Activated CD8-positive, alpha-beta memory T cell treated with anti-CD3 and anti-CD28 coated beads, Interleukin-2, amount 10 ng/mL, durations not matched to agents 7 days and 5 days (primary cell): ENCODE measurements at regions of chr2 and their contacts with region 1.

Region 1: DNA sequence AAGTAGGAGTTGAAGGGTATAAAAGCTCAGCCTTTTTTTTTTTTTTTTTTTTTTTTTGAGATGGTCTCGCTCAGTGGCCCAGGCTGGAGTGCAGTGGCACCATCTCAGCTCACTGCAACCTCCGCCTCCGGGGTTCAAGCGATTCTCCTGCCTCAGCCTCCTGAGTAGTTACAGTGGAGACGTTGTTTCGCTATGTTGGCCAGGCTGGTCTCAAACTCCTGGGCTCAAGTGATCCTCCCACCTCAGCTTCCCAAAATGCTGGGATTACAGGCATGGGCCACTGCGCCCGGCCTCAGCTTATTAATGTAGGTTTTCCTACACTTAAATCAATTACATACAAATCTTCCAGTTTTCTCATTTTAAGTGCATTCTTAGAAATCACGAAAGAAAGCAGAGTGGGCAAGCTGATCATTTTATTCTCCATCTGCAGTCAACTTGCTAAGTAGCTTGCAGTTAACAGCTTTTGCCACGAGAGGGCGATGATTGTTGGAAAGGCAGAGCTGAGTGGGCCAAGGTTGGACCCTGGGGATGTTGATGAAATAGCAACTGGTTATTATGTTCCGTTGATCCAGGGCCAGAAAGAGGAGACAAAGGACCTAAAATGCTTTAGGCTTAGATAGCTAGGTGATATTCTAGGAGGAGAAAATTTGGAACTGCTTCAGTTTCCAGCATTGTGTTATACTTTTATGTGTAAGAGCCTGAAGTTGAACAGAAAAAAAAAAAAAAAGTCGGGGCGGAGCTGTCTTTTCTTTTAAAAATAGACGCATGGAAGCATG is 234.4 kb upstream of the EPAS1 start:
- DNase-seq: peak; percentile 89
- ATAC-seq: peak; percentile 69
- H3K4me3 Mint-ChIP-seq: no peak overlapping the region
- H3K27ac Mint-ChIP-seq: peak overlapping the region; percentile 45
- H3K4me1 Mint-ChIP-seq: peaks cover 43% of the 10 kb centered on the region
- H3K27me3 Mint-ChIP-seq: no peaks in the 10 kb centered on the region

Region 2: GRCh38 chr2:46010925-46011490 is 51.8 kb before region 1 on chr2:
- CTCF ChIA-PET with region 1: interaction called, 16 read pairs
- DNase-seq: peak; percentile 39
- ATAC-seq: peak; percentile 85
- H3K4me3 Mint-ChIP-seq: no peak overlapping the region
- H3K27ac Mint-ChIP-seq: peak overlapping the region; percentile 22
- H3K4me1 Mint-ChIP-seq: peaks cover 51% of the 10 kb centered on the region
- H3K27me3 Mint-ChIP-seq: no peaks in the 10 kb centered on the region

Region 3: GRCh38 chr2:46018773-46019591 is 43.8 kb before region 1 on chr2:
- CTCF ChIA-PET with region 1: interaction called, 11 read pairs
- DNase-seq: no peak
- ATAC-seq: peak; percentile 72
- H3K4me3 Mint-ChIP-seq: peak overlapping the region; percentile 13
- H3K27ac Mint-ChIP-seq: peak overlapping the region; percentile 68
- H3K4me1 Mint-ChIP-seq: peaks cover 77% of the 10 kb centered on the region
- H3K27me3 Mint-ChIP-seq: no peaks in the 10 kb centered on the region

Region 4: GRCh38 chr2:46050489-46050888 is 12.3 kb before region 1 on chr2:
- CTCF ChIA-PET with region 1: interaction called, 38 read pairs
- DNase-seq: no peak
- ATAC-seq: no peak
- H3K4me3 Mint-ChIP-seq: no peak overlapping the region
- H3K27ac Mint-ChIP-seq: peak overlapping the region; percentile 24
- H3K4me1 Mint-ChIP-seq: peaks cover 36% of the 10 kb centered on the region
- H3K27me3 Mint-ChIP-seq: no peaks in the 10 kb centered on the region

Region 5: GRCh38 chr2:46142546-46143428 is 80.0 kb after region 1 on chr2:
- CTCF ChIA-PET with region 1: interaction called, 20 read pairs
- DNase-seq: no peak
- ATAC-seq: no peak
- H3K4me3 Mint-ChIP-seq: no peak overlapping the region
- H3K27ac Mint-ChIP-seq: peak overlapping the region; percentile 58
- H3K4me1 Mint-ChIP-seq: peaks cover 56% of the 10 kb centered on the region
- H3K27me3 Mint-ChIP-seq: no peaks in the 10 kb centered on the region

Region 6: DNA sequence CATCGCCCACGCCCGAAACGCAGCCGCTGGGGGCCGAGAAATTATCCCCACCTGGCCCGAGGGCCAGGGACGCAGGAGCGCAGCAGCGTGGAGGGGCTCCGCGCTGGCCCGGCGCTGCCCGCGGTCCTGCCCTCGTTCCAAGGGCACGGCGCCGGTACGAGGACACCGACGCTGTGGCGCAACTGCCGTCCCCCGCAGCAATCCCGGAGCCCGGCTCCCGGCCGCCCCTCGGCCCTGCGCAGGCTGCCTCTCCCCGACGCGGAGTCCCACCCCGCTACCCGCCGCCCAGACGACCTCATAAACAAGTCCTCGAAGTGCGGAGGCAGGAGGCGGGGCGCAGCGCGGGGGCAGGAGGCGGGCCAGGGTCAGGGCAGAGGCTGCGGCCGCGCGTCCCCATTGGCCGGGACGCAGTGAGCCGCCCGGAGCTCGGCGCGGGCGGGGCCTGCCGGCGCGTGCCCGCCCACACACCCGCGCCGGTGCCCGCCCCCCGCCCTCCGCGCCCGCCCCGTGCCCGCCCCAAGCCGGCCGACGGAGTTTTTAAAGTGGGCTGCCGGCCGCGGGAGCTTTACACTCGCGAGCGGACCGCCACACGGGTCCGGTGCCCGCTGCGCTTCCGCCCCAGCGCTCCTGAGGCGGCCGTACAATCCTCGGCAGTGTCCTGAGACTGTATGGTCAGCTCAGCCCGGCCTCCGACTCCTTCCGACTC is 234.2 kb after region 1 on chr2 and contains the start of gene EPAS1:
- CTCF ChIA-PET with region 1: interaction called, 13 read pairs
- DNase-seq: peak; percentile 91
- ATAC-seq: peak; percentile 93
- H3K4me3 Mint-ChIP-seq: peak within 1 kb of the TSS; percentile 83
- H3K27ac Mint-ChIP-seq: peak within 1 kb of the TSS; percentile 85
- H3K4me1 Mint-ChIP-seq: peaks cover 40% of the 10 kb centered on the region
- H3K27me3 Mint-ChIP-seq: peaks cover 75% of the 10 kb centered on the region
- total RNA-seq, gene EPAS1: 15.6 to 42.5 TPM

Region 7: GRCh38 chr2:46364797-46365457 is 302.1 kb after region 1 on chr2:
- CTCF ChIA-PET with region 1: interaction called, 22 read pairs
- DNase-seq: no peak
- ATAC-seq: no peak
- H3K4me3 Mint-ChIP-seq: no peak overlapping the region
- H3K27ac Mint-ChIP-seq: no peak overlapping the region
- H3K4me1 Mint-ChIP-seq: peaks cover 61% of the 10 kb centered on the region
- H3K27me3 Mint-ChIP-seq: no peaks in the 10 kb centered on the region